B cell (primary cell): ENCODE measurements at regions of chr12 and their contacts with region 1.

Region 1: GRCh38 chr12:51047655-51048540 is at the start of gene LETMD1:
- DNase-seq: peak; percentile 97
- ATAC-seq: peak; percentile 95
- H3K4me3 ChIP-seq: peak within 1 kb of the TSS; percentile 75 to 91 (median 79)
- H3K4me3 Mint-ChIP-seq: peak within 1 kb of the TSS; percentile 96
- H3K27ac ChIP-seq: peak within 1 kb of the TSS; percentile 81
- H3K27ac Mint-ChIP-seq: peak within 1 kb of the TSS; percentile 95
- H3K4me1 ChIP-seq: peaks cover 18 to 22% of the 10 kb centered on the region in 2 donors
- H3K4me1 Mint-ChIP-seq: peaks cover 29% of the 10 kb centered on the region
- H3K27me3 ChIP-seq: no peaks in the 10 kb centered on the region
- H3K27me3 Mint-ChIP-seq: no peaks in the 10 kb centered on the region
- CTCF ChIP-seq: peak; percentile 97
- total RNA-seq, gene LETMD1: 101 and 105 TPM in 2 replicates

Region 2: DNA sequence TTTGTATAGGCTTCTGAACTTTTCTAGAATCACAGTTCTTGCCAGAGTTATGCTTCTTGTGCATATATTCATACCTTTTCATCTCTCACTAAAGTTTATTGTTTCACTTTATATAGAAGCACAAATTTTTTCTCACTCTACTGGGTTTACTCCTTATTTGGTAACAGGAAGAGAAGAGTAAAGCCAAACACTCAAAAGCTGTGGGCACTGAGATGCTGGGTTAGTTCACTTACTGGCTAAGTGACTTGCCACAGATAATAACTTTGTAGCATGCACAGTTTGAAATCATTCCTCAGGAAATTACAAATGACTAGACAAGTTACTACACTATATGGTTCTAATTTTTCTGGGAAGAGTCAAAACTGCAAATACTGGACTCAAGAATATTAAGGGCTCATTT is 87.8 kb before region 1 on chr12:
- CTCF ChIA-PET with region 1: no interaction called
- POLR2A ChIA-PET with region 1: no interaction called
- intact Hi-C with region 1: no loop called
- DNase-seq: no peak
- ATAC-seq: no peak
- H3K4me3 ChIP-seq: no peak overlapping the region
- H3K4me3 Mint-ChIP-seq: no peak overlapping the region
- H3K27ac ChIP-seq: peak overlapping the region in 1 of 2 donors; percentile 19
- H3K27ac Mint-ChIP-seq: no peak overlapping the region
- H3K4me1 ChIP-seq: no peaks in the 10 kb centered on the region
- H3K4me1 Mint-ChIP-seq: peaks cover 7% of the 10 kb centered on the region
- H3K27me3 ChIP-seq: no peaks in the 10 kb centered on the region
- H3K27me3 Mint-ChIP-seq: no peaks in the 10 kb centered on the region
- CTCF ChIP-seq: no peak

Region 3: GRCh38 chr12:51083126-51083833 is 35.4 kb after region 1 on chr12 and contains the start of gene CSRNP2:
- CTCF ChIA-PET with region 1: interaction called, 4 read pairs
- POLR2A ChIA-PET with region 1: interaction called, 7 read pairs
- intact Hi-C with region 1: loop called (anchors 1 kb)
- DNase-seq: peak; percentile 96
- ATAC-seq: peak; percentile 99
- H3K4me3 ChIP-seq: peak within 1 kb of the TSS; percentile 54 to 87 (median 77)
- H3K4me3 Mint-ChIP-seq: peak within 1 kb of the TSS; percentile 96
- H3K27ac ChIP-seq: peak within 1 kb of the TSS; percentile 11 to 88
- H3K27ac Mint-ChIP-seq: peak within 1 kb of the TSS; percentile 88
- H3K4me1 ChIP-seq: peaks cover 9 to 17% of the 10 kb centered on the region in 2 donors
- H3K4me1 Mint-ChIP-seq: peaks cover 25% of the 10 kb centered on the region
- H3K27me3 ChIP-seq: no peaks in the 10 kb centered on the region
- H3K27me3 Mint-ChIP-seq: no peaks in the 10 kb centered on the region
- CTCF ChIP-seq: peak; percentile 20
- total RNA-seq, gene CSRNP2: 49.8 and 52.3 TPM in 2 replicates

Region 4: GRCh38 chr12:51238510-51239334 is 190.8 kb after region 1 on chr12 and contains the start of gene DAZAP2:
- CTCF ChIA-PET with region 1: no interaction called
- POLR2A ChIA-PET with region 1: no interaction called
- intact Hi-C with region 1: loop called (anchors 1 kb)
- DNase-seq: peak; percentile 98
- ATAC-seq: peak; percentile 92
- H3K4me3 ChIP-seq: peak within 1 kb of the TSS; percentile 69 to 100 (median 100)
- H3K4me3 Mint-ChIP-seq: peak within 1 kb of the TSS; percentile 93
- H3K27ac ChIP-seq: peak within 1 kb of the TSS; percentile 100
- H3K27ac Mint-ChIP-seq: peak within 1 kb of the TSS; percentile 100
- H3K4me1 ChIP-seq: peaks cover 24 to 34% of the 10 kb centered on the region in 2 donors
- H3K4me1 Mint-ChIP-seq: peaks cover 40% of the 10 kb centered on the region
- H3K27me3 ChIP-seq: no peaks in the 10 kb centered on the region
- H3K27me3 Mint-ChIP-seq: no peaks in the 10 kb centered on the region
- CTCF ChIP-seq: peak; percentile 31
- total RNA-seq, gene DAZAP2: 219 and 233 TPM in 2 replicates

Region 5: GRCh38 chr12:51326762-51327439 is 279.0 kb after region 1 on chr12:
- CTCF ChIA-PET with region 1: no interaction called
- POLR2A ChIA-PET with region 1: no interaction called
- intact Hi-C with region 1: loop called (anchors 5 kb)
- DNase-seq: peak; percentile 73
- ATAC-seq: peak; percentile 28
- H3K4me3 ChIP-seq: peak overlapping the region in 1 of 5 experiments; percentile 22
- H3K4me3 Mint-ChIP-seq: peak overlapping the region; percentile 35
- H3K27ac ChIP-seq: peak overlapping the region; percentile 59 to 64
- H3K27ac Mint-ChIP-seq: peak overlapping the region; percentile 83
- H3K4me1 ChIP-seq: peaks cover 72 to 79% of the 10 kb centered on the region in 2 donors
- H3K4me1 Mint-ChIP-seq: peaks cover 80% of the 10 kb centered on the region
- H3K27me3 ChIP-seq: no peaks in the 10 kb centered on the region
- H3K27me3 Mint-ChIP-seq: no peaks in the 10 kb centered on the region
- CTCF ChIP-seq: no peak